Mammary epithelial cell (primary cell): ENCODE measurements at regions of chr12 and their contacts with region 1.

Region 1: DNA sequence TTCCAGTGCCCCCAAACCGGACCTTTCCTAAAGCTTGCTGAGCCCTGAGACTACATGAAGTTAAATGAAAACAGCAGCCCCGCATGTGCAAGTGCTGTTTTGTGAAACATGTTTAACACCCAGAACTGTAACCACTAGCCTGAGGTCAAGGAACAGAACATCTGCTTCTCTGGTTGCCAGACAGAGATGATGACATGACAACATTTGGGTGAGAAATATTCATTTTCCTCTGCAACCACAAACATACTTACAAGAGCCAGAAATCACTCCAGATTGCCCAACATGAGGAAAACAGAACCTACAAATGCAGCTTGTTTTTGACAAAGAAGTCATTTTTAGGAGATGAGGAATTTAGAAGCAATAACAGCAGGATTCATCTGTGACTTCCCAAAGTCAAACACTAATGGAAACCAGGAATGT is 110.4 kb downstream of the BCAT1 start:
- DNase-seq: peak; percentile 35
- H3K4me3 ChIP-seq: no peak overlapping the region
- H3K27ac ChIP-seq: no peak overlapping the region
- H3K4me1 ChIP-seq: no peaks in the 10 kb centered on the region
- H3K27me3 ChIP-seq: no peaks in the 10 kb centered on the region
- CTCF ChIP-seq: no peak

Region 2: GRCh38 chr12:23204933-23205778 is 1633.4 kb before region 1 on chr12:
- CTCF ChIA-PET with region 1: no interaction called
- dilution Hi-C with region 1: no loop called
- in situ Hi-C with region 1: no loop called
- intact Hi-C with region 1: loop called (anchors 2 kb)
- DNase-seq: peak; percentile 37
- H3K4me3 ChIP-seq: no peak overlapping the region
- H3K27ac ChIP-seq: no peak overlapping the region
- H3K4me1 ChIP-seq: no peaks in the 10 kb centered on the region
- H3K27me3 ChIP-seq: no peaks in the 10 kb centered on the region
- CTCF ChIP-seq: peak; percentile 84 to 94

Region 3: DNA sequence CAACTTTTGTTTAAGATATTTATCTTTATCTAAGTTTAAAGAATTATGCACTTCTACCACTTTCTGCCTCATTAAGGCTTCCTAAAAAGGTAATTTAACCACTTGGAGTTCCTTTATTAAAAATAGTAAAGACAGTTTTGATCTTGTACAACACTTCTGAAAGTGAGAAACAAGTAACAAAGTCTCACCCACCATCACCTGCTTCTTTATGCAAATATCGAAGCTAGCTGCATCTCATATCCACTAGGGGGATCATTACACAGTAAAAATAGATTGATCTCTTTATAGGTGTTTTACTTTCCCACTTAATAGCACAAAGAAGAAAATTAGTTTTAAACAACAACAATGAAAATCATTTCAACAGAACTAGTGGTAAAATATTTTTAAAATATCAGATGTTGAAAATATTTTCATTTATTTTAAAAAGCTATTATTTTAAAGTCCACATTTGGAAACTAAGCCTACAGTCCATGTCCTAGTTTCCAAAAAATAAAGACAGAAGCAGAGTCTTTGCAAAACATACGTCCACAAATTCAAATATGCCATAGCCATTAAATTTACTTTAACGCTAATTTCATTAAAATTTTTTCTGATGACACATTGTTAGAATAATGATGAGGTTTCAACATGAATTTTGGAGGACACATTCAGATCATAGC is 729.0 kb before region 1 on chr12:
- CTCF ChIA-PET with region 1: no interaction called
- dilution Hi-C with region 1: no loop called
- in situ Hi-C with region 1: no loop called
- intact Hi-C with region 1: loop called (anchors 2 kb)
- DNase-seq: peak; percentile 7
- H3K4me3 ChIP-seq: no peak overlapping the region
- H3K27ac ChIP-seq: no peak overlapping the region
- H3K4me1 ChIP-seq: no peaks in the 10 kb centered on the region
- H3K27me3 ChIP-seq: no peaks in the 10 kb centered on the region
- CTCF ChIP-seq: peak; percentile 51 to 59

Region 4: GRCh38 chr12:24596768-24597388 is 241.7 kb before region 1 on chr12:
- CTCF ChIA-PET with region 1: no interaction called
- dilution Hi-C with region 1: no loop called
- in situ Hi-C with region 1: no loop called
- intact Hi-C with region 1: loop called (anchors 10 kb)
- DNase-seq: peak; percentile 20
- H3K4me3 ChIP-seq: no peak overlapping the region
- H3K27ac ChIP-seq: no peak overlapping the region
- H3K4me1 ChIP-seq: peaks cover 6% of the 10 kb centered on the region
- H3K27me3 ChIP-seq: no peaks in the 10 kb centered on the region
- CTCF ChIP-seq: peak; percentile 66 to 70